SK-N-SH (cell line): ENCODE measurements at regions of chr1 and their contacts with region 1.

Region 1: DNA sequence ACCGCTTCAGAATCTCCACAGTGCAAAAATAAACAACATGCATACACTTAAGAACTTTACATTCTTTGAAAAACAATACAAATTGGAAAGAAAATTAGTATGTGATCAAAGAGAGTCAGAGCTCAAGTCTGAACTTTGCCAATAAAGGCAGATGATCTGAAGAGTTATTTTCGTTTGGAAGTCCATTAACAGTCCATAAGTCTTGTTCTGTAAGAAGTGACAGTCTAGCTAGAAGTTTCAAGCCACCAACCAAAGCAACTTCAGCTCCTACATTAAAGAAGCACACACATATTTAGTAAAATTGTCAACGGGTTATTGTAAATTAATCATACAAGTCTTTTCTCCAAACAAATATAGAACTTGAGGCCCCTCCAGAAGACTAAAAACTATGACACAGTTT is 20.7 kb downstream of the ANGEL2 start:
- DNase-seq: no peak
- H3K4me3 ChIP-seq: no peak overlapping the region
- H3K27ac ChIP-seq: no peak overlapping the region
- H3K4me1 ChIP-seq: no peaks in the 10 kb centered on the region; a peak in 1 of 4 replicates
- H3K27me3 ChIP-seq: no peaks in the 10 kb centered on the region
- CTCF ChIP-seq: no peak
- EP300 ChIP-seq: no peak
- RAD21 ChIP-seq: no peak

Region 2: DNA sequence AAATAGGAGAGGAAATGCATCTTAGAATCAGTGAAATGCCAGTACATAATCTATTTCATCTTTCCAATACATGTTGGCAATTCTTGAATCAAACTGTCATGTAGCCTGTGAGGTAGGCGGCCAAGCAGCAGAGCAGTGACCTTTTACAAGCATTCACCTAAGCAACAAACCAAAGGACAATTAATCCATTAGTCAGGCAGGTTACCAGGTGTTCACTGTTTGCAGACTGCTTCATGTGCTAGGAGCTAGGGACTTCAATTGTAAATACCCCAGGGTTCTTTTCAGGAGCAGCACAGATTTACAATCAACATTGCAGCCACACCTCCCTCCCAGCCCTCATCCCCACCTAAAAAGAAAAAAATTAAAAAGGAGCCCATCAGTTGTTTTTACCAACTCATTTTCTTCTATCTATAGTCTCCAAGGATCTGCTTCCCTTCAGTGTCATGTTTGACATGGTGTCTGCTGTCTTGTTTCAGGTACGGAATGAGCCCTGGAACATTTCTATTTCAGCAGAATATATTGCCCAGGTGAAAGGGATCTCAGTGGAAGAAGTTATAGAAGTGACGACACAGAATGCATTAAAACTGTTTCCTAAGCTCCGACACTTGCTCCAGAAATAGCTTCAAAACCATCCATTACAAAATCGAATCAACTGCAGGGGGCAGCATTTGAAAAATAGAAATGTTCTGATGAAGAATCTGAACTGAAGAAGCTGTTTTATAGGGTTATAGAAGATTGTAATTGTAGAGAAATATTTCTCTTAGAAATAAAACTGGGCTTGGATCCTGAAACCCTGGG is 180.2 kb before region 1 on chr1:
- CTCF ChIA-PET with region 1: interaction called, 23 read pairs
- POLR2A ChIA-PET with region 1: no interaction called
- DNase-seq: peak; percentile 20
- H3K4me3 ChIP-seq: no peak overlapping the region
- H3K27ac ChIP-seq: no peak overlapping the region
- H3K4me1 ChIP-seq: no peaks in the 10 kb centered on the region
- H3K27me3 ChIP-seq: no peaks in the 10 kb centered on the region
- CTCF ChIP-seq: peak; percentile 50
- EP300 ChIP-seq: no peak
- RAD21 ChIP-seq: peak; percentile 41; the same call in 1 of the 2 replicates

Region 3: DNA sequence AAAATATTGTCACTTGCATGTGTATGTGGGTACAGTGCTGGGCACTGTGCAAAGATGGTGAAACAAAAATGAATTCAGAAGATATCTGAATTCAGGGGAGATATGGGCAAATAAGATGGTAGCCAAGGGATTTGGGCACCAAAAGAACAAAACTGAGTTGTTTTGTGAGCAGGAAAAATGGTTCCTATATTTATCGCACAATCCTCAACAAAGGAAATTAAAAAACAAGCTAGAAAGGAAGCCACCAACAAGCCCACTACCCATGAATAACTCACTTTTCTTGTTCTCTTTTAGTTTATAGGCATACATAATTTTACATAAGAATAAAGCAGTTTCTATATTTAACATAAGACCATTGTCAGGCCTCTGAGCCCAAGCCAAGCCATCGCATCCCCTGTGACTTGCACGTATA is 85.3 kb before region 1 on chr1:
- CTCF ChIA-PET with region 1: no interaction called
- POLR2A ChIA-PET with region 1: no interaction called
- DNase-seq: no peak
- H3K4me3 ChIP-seq: no peak overlapping the region
- H3K27ac ChIP-seq: no peak overlapping the region
- H3K4me1 ChIP-seq: no peaks in the 10 kb centered on the region
- H3K27me3 ChIP-seq: no peaks in the 10 kb centered on the region
- CTCF ChIP-seq: no peak
- EP300 ChIP-seq: no peak
- RAD21 ChIP-seq: no peak

Region 4: DNA sequence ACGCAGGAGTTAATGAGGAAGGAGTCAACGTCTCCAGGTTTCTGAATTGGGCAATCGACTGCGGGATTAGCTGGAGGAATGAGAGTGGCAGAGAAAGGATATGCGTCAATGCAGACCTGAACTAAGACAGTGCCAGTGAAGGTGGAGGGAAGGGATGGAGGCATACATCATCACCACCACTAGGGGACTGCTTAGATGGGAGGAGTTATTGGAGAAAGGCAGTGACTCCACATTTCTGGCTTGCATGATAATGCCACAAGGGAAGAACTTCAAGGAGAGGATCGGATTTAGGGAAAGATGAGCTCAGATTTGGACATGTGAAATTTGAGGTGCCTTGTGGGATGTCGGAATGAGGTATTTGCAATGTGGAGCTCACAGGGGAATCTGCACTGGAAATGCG is 27.1 kb before region 1 on chr1:
- CTCF ChIA-PET with region 1: interaction called, 14 read pairs
- POLR2A ChIA-PET with region 1: no interaction called
- DNase-seq: peak; percentile 57
- H3K4me3 ChIP-seq: no peak overlapping the region
- H3K27ac ChIP-seq: no peak overlapping the region
- H3K4me1 ChIP-seq: peaks cover 0 to 2% of the 10 kb centered on the region in 2 experiments; a peak in 1 of 4 replicates
- H3K27me3 ChIP-seq: no peaks in the 10 kb centered on the region
- CTCF ChIP-seq: peak; percentile 59
- EP300 ChIP-seq: no peak
- RAD21 ChIP-seq: no peak

Region 5: DNA sequence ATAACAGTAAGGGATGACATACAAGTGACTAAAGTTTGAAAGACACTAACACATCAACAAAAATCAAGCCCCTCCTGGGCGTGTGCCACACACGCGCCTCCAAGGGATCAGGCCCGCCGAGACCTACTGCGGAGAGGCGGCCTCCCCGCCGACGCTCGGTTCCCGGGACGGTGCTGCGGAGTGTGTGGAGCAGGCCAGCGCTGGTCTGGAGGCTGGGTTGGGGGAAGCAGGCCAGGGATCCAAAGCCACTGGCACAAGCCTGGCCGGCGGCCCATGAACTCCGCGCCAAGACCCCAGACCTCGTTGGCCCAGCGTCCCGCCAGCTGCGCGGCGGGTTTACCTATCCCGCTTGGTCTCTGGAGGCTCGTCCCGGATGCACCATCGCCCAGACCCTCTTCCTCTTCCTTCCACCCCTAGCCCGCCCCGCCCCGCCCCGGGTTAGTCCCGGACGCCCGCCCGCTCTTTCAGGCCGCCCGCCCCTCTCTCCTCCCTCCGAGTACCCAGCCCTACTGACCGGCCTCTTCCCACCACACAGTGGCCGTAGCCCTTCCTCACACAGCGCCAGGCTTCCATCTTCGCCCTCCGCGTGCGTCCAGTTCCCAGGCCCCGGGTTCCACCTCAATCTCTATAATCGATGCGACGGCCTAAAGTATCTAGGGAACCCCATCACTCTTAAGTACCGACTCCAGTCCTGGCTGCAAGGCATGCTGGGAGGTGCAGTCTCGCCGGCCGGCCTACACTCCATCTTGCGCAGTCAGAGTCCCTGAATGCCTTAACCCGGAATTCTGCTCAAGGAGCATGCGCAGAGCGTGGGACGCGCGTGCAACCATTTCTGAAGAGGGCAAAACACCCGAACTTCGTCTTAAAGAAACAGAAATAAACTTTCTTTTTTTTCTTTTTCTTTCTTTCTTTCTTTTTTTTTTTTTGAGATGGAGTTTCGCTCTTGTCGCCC is 20.4 kb after region 1 on chr1 and contains the start of gene ANGEL2:
- CTCF ChIA-PET with region 1: interaction called, 19 read pairs
- POLR2A ChIA-PET with region 1: no interaction called
- DNase-seq: peak; percentile 92
- H3K4me3 ChIP-seq: peak within 1 kb of the TSS; percentile 95 to 96
- H3K27ac ChIP-seq: peak within 1 kb of the TSS; percentile 88 to 100
- H3K4me1 ChIP-seq: peaks cover 6 to 9% of the 10 kb centered on the region in 2 experiments; a peak in 3 of 4 replicates
- H3K27me3 ChIP-seq: no peaks in the 10 kb centered on the region
- CTCF ChIP-seq: no peak
- EP300 ChIP-seq: no peak
- RAD21 ChIP-seq: no peak
- polyA plus RNA-seq, gene ANGEL2: 14.0 and 17.8 TPM in 2 replicates